CD14-positive monocyte (primary cell): ENCODE measurements at regions of chr10 and their contacts with region 1.

Region 1: DNA sequence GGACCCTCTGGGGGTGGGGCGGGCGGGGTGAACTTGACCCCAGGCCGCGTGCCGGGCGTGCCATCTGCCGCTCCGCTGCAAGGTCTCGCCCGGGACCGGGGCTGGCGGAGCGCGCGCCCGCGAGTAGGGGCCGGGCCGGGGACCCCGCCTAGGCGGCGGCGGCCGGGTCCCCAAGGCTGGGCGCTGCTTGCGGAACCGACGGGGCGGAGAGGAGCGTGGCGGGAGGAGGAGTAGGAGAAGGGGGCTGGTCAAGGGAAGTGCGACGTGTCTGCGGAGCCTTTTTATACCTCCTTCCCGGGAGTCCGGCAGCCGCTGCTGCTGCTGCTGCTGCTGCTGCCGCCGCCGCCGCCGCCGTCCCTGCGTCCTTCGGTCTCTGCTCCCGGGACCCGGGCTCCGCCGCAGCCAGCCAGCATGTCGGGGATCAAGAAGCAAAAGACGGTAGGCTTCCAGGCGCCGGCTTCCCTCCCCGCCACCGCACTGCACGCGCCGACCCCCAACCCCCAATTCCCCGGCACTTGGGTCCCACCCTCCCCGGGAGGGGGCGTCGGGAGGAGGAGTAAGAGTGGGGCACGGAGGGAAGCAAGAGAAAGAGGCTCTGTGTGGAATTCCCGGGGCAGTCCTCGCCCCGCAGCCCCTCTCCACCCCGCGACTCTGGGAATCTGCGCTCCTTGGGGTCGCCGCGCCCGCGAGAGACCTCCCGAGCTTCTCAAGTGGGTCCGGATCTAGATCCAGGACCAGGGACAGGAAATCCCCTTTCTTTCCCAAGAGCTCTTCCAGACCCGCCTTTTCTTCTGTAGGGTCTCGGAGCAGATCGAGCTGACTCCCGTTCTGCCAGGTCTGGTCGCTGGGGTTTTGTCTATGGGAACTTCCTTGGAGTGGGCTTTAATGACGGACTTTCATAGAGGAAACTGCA is at the start of gene PAPSS2:
- DNase-seq: peak; percentile 43 to 63 (median 63)
- H3K4me3 ChIP-seq: peak within 1 kb of the TSS; percentile 55 to 88 (median 82)
- H3K4me3 Mint-ChIP-seq: peak within 1 kb of the TSS; percentile 93 to 95
- H3K27ac ChIP-seq: peak within 1 kb of the TSS; percentile 23 to 37
- H3K27ac Mint-ChIP-seq: peak within 1 kb of the TSS; percentile 62 to 91 (median 83)
- H3K4me1 ChIP-seq: peaks cover 21 to 30% of the 10 kb centered on the region in 2 donors
- H3K4me1 Mint-ChIP-seq: peaks cover 35% of the 10 kb centered on the region
- H3K27me3 ChIP-seq: peaks cover 0 to 3% of the 10 kb centered on the region in 2 donors
- H3K27me3 Mint-ChIP-seq: peaks cover 7 to 16% (median 13%) of the 10 kb centered on the region in 3 donors
- CTCF ChIP-seq: no peak
- polyA plus RNA-seq, gene PAPSS2: 3.5 to 6.5 (median 6.2) TPM

Region 2: GRCh38 chr10:87635610-87636312 is 24.1 kb before region 1 on chr10:
- intact Hi-C with region 1: no loop called
- DNase-seq: peak; percentile 71 to 88 (median 83)
- H3K4me3 ChIP-seq: peak overlapping the region in 1 of 3 experiments; percentile 23
- H3K4me3 Mint-ChIP-seq: peak overlapping the region in 1 of 2 donors; percentile 82
- H3K27ac ChIP-seq: peak overlapping the region in 1 of 2 donors; percentile 53
- H3K27ac Mint-ChIP-seq: peak overlapping the region; percentile 54 to 92 (median 85)
- H3K4me1 ChIP-seq: peaks cover 10 to 14% of the 10 kb centered on the region in 2 donors
- H3K4me1 Mint-ChIP-seq: peaks cover 19% of the 10 kb centered on the region
- H3K27me3 ChIP-seq: no peaks in the 10 kb centered on the region
- H3K27me3 Mint-ChIP-seq: no peaks in the 10 kb centered on the region
- CTCF ChIP-seq: no peak

Region 3: DNA sequence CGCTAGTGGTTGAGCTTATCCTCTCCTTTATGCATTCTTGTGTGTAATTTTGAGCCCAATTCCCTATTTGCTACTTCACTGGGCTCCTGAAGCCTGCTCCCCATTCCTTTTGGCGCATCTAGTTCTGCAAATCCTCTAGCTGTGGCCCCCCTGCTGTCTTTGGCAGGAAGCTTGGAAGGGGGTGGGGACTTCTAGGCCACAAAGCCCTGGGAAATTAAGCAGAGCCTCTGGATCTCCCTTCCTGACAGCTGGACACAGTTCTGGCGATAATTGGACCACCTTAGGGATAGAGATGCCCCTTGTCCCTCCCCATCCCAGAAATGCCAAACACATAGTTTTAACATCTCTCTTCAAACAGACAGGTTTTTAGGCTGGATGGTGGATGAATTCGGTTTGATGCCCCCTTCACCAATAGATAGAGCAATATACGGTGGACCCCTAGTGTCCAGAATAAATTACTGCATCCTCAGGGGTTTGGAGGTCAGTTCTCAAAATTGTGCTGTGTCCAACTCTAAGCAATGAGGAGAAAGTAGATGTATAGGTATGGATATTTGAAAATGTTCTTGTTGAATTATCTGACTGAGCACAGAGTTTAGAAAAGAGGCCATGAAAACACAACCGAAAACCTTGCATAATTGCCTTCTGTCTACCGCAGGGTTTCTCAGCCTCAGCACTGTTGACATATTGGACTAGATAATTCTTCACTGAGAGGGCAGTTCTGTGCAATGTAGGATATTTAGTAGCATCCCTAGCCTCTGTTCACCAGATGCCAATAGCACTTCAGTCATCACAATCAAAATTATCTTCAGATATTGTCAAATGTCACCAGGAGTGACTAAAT is 75.4 kb after region 1 on chr10:
- intact Hi-C with region 1: loop called (anchors 5 kb)
- DNase-seq: peak; percentile 9 to 34 (median 30)
- H3K4me3 ChIP-seq: peak overlapping the region in 1 of 3 experiments; percentile 7
- H3K4me3 Mint-ChIP-seq: peak overlapping the region in 1 of 2 donors; percentile 37
- H3K27ac ChIP-seq: no peak overlapping the region
- H3K27ac Mint-ChIP-seq: peak overlapping the region in 6 of 7 donors; percentile 30 to 75 (median 54)
- H3K4me1 ChIP-seq: peaks cover 25 to 28% of the 10 kb centered on the region in 2 donors
- H3K4me1 Mint-ChIP-seq: peaks cover 28% of the 10 kb centered on the region
- H3K27me3 ChIP-seq: no peaks in the 10 kb centered on the region
- H3K27me3 Mint-ChIP-seq: no peaks in the 10 kb centered on the region
- CTCF ChIP-seq: peak; percentile 87

Region 4: DNA sequence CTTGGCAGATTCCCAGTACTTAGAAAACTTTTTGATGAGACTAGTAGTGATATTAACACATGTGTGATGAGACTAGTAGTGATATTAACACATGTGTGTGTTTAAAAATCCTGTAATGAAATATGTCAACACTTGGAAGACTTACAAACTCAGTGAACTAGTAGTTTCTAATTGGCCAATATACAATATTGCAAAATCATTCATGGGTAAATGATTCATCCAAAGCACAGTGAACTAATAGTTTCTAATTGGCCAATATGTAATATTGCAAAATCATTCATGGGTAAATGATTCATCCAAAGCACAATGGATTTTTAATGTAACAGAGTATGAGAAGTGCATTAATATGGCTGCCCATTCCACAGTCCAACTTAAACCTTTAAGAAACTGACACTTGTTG is 80.4 kb after region 1 on chr10:
- intact Hi-C with region 1: loop called (anchors 5 kb)
- DNase-seq: peak; percentile 78 to 98 (median 90)
- H3K4me3 ChIP-seq: no peak overlapping the region
- H3K4me3 Mint-ChIP-seq: no peak overlapping the region
- H3K27ac ChIP-seq: peak overlapping the region in 1 of 2 donors; percentile 87
- H3K27ac Mint-ChIP-seq: peak overlapping the region; percentile 82 to 97 (median 93)
- H3K4me1 ChIP-seq: peaks cover 37 to 49% of the 10 kb centered on the region in 2 donors
- H3K4me1 Mint-ChIP-seq: peaks cover 38% of the 10 kb centered on the region
- H3K27me3 ChIP-seq: no peaks in the 10 kb centered on the region
- H3K27me3 Mint-ChIP-seq: no peaks in the 10 kb centered on the region
- CTCF ChIP-seq: no peak

Region 5: DNA sequence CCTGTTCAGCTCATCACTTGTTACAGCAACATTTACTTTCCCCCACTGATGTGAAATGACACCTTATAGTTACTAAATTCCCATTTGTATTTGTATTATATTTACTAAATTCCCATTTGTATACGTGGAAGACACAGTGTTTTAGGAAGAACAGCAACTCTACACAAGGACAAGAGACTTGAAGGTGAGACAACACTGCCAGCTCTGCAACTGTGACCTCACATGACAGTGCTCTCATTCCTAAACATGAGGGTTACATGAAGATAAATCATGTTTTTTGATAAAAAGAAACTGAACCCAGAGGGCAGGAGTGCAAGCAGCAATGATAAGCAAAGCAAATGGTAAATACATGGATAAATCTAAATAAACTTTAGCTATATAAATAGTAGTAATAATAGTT is 97.9 kb after region 1 on chr10:
- intact Hi-C with region 1: loop called in 1 of 2 experiments (anchors 5 kb)
- DNase-seq: no peak
- H3K4me3 ChIP-seq: no peak overlapping the region
- H3K4me3 Mint-ChIP-seq: no peak overlapping the region
- H3K27ac ChIP-seq: no peak overlapping the region
- H3K27ac Mint-ChIP-seq: no peak overlapping the region
- H3K4me1 ChIP-seq: peaks cover 19 to 21% of the 10 kb centered on the region in 2 donors
- H3K4me1 Mint-ChIP-seq: peaks cover 35% of the 10 kb centered on the region
- H3K27me3 ChIP-seq: no peaks in the 10 kb centered on the region
- H3K27me3 Mint-ChIP-seq: no peaks in the 10 kb centered on the region
- CTCF ChIP-seq: no peak

Region 6: GRCh38 chr10:87771871-87772500 is 112.2 kb after region 1 on chr10:
- intact Hi-C with region 1: loop called (anchors 5 kb)
- DNase-seq: peak in 2 of 3 donors; percentile 21 to 43
- H3K4me3 ChIP-seq: no peak overlapping the region
- H3K4me3 Mint-ChIP-seq: no peak overlapping the region
- H3K27ac ChIP-seq: no peak overlapping the region
- H3K27ac Mint-ChIP-seq: no peak overlapping the region
- H3K4me1 ChIP-seq: peaks cover 7 to 8% of the 10 kb centered on the region in 2 donors
- H3K4me1 Mint-ChIP-seq: peaks cover 11% of the 10 kb centered on the region
- H3K27me3 ChIP-seq: no peaks in the 10 kb centered on the region
- H3K27me3 Mint-ChIP-seq: no peaks in the 10 kb centered on the region
- CTCF ChIP-seq: peak; percentile 77